ENCODE measurements at regions of chr1 and their contacts with region 1.

Region 1: GRCh38 chr1:95084317-95085176 is 11.8 kb upstream of the ALG14 start:
- DNase-seq: peak; percentile 59
- H3K4me3 ChIP-seq: no peak overlapping the region
- H3K27ac ChIP-seq: no peak overlapping the region
- H3K4me1 ChIP-seq: no peaks in the 10 kb centered on the region
- CTCF ChIP-seq: peak; percentile 87

Region 2: DNA sequence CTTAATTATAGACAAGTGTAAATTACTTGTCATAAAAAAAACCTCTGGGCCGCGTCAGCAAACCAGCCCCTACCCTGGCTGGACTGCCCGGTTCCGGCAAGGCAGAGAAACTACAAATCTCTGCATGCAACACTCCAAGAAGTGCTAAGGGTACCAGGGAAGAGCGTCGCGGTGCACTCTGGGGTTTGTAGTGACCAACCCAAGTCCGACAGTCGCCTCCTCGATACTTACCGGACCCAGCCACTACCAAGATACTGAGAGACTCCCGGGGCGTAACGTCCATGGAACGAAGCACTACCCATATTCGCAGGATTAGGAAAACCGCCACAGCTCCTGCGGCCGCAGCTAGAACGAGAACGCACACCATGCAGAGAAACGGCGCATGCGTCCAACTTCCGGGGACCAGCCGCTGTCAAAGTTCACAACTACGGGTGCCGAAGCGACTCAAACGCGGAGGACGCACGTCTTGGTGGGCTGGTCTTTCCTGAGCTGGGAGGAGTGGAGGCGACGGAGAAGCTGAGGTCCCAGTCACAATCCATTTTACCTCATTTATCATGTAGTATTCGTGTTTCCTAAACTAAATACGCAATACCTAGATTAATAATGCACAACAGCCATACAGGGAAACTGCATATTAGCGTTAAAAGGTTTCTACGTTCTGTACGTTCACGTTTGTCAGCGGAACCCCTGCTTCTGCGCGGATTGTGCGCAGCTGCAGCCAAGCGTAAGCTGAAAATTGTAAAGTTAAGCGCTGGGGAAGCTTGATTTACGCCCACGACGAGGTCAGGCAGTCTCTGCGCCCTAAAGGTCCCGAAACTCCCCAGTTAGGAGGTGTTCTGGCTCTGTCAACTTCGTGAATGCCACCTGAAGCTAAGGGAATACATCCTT is 11.8 kb before region 1 on chr1 and contains the start of gene ALG14:
- CTCF ChIA-PET with region 1: interaction called, 4 read pairs
- POLR2A ChIA-PET with region 1: interaction called, 14 read pairs
- intact Hi-C with region 1: no loop called
- DNase-seq: peak; percentile 94
- H3K4me3 ChIP-seq: peak within 1 kb of the TSS; percentile 71
- H3K27ac ChIP-seq: peak within 1 kb of the TSS; percentile 38
- H3K4me1 ChIP-seq: peaks cover 14% of the 10 kb centered on the region
- CTCF ChIP-seq: no peak
- total RNA-seq, gene ALG14: 1.6 and 5.2 TPM in 2 replicates

Region 3: DNA sequence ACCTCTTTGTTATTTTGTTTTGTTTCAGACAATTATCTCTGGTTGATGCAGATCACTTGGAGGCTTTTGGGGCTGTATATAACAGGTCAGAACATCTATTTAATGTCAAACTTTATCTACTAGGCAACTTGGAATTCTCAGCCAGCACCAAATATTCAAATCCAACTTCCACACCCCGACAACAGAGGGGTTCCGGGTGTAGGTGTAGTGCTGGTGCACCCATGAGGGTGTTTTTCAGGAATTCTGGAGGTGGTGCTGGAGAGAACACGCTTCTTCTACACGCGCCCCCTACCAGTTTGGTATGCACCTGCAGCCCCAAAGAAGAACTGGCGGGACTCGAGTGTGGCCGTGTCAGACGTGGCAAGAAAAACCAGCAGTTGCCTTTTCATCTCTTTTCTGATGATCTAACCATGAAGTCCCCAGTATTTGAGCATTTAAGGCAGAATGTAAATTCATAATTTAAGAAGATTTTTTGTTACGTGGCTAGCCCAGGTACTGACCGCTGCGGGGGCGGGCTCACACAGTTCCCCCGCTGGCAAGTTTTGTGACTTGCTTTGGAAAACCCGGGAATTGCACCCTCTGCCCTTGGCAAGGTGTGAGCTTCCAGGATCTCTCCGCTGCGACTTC is 32.1 kb after region 1 on chr1:
- CTCF ChIA-PET with region 1: no interaction called
- POLR2A ChIA-PET with region 1: no interaction called
- intact Hi-C with region 1: loop called (anchors 2 kb)
- DNase-seq: peak; percentile 44
- H3K4me3 ChIP-seq: peak overlapping the region; percentile 50
- H3K27ac ChIP-seq: no peak overlapping the region
- H3K4me1 ChIP-seq: peaks cover 5% of the 10 kb centered on the region
- CTCF ChIP-seq: peak; percentile 76